Activated CD4-positive, alpha-beta T cell treated with anti-CD3 and anti-CD28 coated beads, Interleukin-2, amount 10 ng/mL, durations not matched to agents 7 days and 5 days (primary cell): ENCODE measurements at regions of chr2 and their contacts with region 1.

Region 1: GRCh38 chr2:222613715-222614331 is 42.1 kb downstream of the FARSB start:
- DNase-seq: peak; percentile 8
- H3K4me3 Mint-ChIP-seq: no peak overlapping the region
- H3K27ac Mint-ChIP-seq: no peak overlapping the region
- H3K4me1 Mint-ChIP-seq: no peaks in the 10 kb centered on the region
- H3K27me3 Mint-ChIP-seq: no peaks in the 10 kb centered on the region

Region 2: GRCh38 chr2:222208010-222208690 is 405.7 kb before region 1 on chr2:
- CTCF ChIA-PET with region 1: no interaction called
- POLR2A ChIA-PET with region 1: interaction called, 10 read pairs
- DNase-seq: no peak
- H3K4me3 Mint-ChIP-seq: no peak overlapping the region
- H3K27ac Mint-ChIP-seq: no peak overlapping the region
- H3K4me1 Mint-ChIP-seq: no peaks in the 10 kb centered on the region
- H3K27me3 Mint-ChIP-seq: no peaks in the 10 kb centered on the region

Region 3: GRCh38 chr2:222572751-222573174 is 41.1 kb before region 1 on chr2:
- CTCF ChIA-PET with region 1: no interaction called
- POLR2A ChIA-PET with region 1: no interaction called
- DNase-seq: no peak
- H3K4me3 Mint-ChIP-seq: no peak overlapping the region
- H3K27ac Mint-ChIP-seq: peak overlapping the region; percentile 61
- H3K4me1 Mint-ChIP-seq: peaks cover 10% of the 10 kb centered on the region
- H3K27me3 Mint-ChIP-seq: no peaks in the 10 kb centered on the region